ENCODE measurements at regions of chr20 and their contacts with region 1.

Region 1: GRCh38 chr20:47973519-47974233 is 188.4 kb upstream of the SULF2 start:
- DNase-seq: peak; percentile 95
- H3K4me3 Mint-ChIP-seq: peak overlapping the region; percentile 65
- H3K27ac Mint-ChIP-seq: peak overlapping the region; percentile 99
- H3K4me1 Mint-ChIP-seq: peaks cover 63% of the 10 kb centered on the region
- H3K27me3 Mint-ChIP-seq: no peaks in the 10 kb centered on the region
- CTCF ChIP-seq: no peak

Region 2: GRCh38 chr20:47857566-47858471 is 115.9 kb before region 1 on chr20:
- CTCF ChIA-PET with region 1: interaction called, 3 read pairs
- intact Hi-C with region 1: loop called (anchors 2 kb)
- DNase-seq: no peak
- H3K4me3 Mint-ChIP-seq: no peak overlapping the region
- H3K27ac Mint-ChIP-seq: peak overlapping the region; percentile 40
- H3K4me1 Mint-ChIP-seq: peaks cover 30% of the 10 kb centered on the region
- H3K27me3 Mint-ChIP-seq: peaks cover 2% of the 10 kb centered on the region
- CTCF ChIP-seq: no peak

Region 3: DNA sequence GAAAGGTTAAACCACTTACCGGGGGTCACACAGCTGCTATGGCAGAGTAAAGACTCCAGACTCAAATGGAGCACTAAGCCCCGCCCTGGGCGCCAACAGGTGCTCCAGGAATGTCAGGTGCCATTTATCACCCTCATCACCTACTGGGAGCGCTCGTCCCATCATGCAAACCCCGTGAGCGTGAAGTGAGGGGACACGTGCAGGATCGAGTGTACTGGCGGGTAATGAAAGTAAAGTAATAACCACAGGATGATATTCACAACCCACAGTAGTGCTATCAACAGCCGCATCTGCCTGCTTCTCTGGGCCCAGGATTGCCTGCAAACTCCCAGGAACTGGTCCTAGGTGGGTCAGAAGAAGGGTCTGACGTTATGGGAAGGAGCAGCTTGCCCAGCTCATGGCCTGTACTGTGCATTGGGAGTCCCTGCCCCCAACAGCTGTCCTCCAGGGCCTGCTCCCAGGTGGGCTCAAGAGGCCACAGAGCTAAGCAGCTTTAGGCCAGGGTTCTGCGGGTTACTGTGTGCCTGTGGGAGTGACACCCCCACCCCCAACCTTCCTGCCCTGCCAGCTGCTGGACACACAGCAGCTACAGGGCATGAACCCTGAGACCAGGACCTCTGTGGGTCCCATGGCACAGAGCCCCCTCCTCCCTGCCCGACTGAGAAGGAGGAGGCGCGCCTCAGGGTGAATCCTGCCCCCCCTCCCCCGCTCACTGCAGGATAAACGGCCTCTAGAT is 67.9 kb before region 1 on chr20:
- CTCF ChIA-PET with region 1: no interaction called
- intact Hi-C with region 1: no loop called
- DNase-seq: no peak
- H3K4me3 Mint-ChIP-seq: no peak overlapping the region
- H3K27ac Mint-ChIP-seq: no peak overlapping the region
- H3K4me1 Mint-ChIP-seq: peaks cover 13% of the 10 kb centered on the region
- H3K27me3 Mint-ChIP-seq: peaks cover 33% of the 10 kb centered on the region
- CTCF ChIP-seq: no peak

Region 4: GRCh38 chr20:48025031-48025515 is 51.4 kb after region 1 on chr20:
- CTCF ChIA-PET with region 1: no interaction called
- intact Hi-C with region 1: no loop called
- DNase-seq: no peak
- H3K4me3 Mint-ChIP-seq: no peak overlapping the region
- H3K27ac Mint-ChIP-seq: no peak overlapping the region
- H3K4me1 Mint-ChIP-seq: no peaks in the 10 kb centered on the region
- H3K27me3 Mint-ChIP-seq: peaks cover 6% of the 10 kb centered on the region
- CTCF ChIP-seq: no peak

Region 5: GRCh38 chr20:48064899-48065298 is 91.2 kb after region 1 on chr20:
- CTCF ChIA-PET with region 1: no interaction called
- intact Hi-C with region 1: loop called (anchors 5 kb)
- DNase-seq: no peak
- H3K4me3 Mint-ChIP-seq: no peak overlapping the region
- H3K27ac Mint-ChIP-seq: no peak overlapping the region
- H3K4me1 Mint-ChIP-seq: peaks cover 34% of the 10 kb centered on the region
- H3K27me3 Mint-ChIP-seq: no peaks in the 10 kb centered on the region
- CTCF ChIP-seq: no peak

Region 6: GRCh38 chr20:48283305-48284080 is 309.8 kb after region 1 on chr20:
- CTCF ChIA-PET with region 1: no interaction called
- intact Hi-C with region 1: loop called (anchors 5 kb)
- DNase-seq: peak; percentile 91
- H3K4me3 Mint-ChIP-seq: peak overlapping the region; percentile 2
- H3K27ac Mint-ChIP-seq: peak overlapping the region; percentile 51
- H3K4me1 Mint-ChIP-seq: peaks cover 55% of the 10 kb centered on the region
- H3K27me3 Mint-ChIP-seq: no peaks in the 10 kb centered on the region
- CTCF ChIP-seq: no peak

Region 7: DNA sequence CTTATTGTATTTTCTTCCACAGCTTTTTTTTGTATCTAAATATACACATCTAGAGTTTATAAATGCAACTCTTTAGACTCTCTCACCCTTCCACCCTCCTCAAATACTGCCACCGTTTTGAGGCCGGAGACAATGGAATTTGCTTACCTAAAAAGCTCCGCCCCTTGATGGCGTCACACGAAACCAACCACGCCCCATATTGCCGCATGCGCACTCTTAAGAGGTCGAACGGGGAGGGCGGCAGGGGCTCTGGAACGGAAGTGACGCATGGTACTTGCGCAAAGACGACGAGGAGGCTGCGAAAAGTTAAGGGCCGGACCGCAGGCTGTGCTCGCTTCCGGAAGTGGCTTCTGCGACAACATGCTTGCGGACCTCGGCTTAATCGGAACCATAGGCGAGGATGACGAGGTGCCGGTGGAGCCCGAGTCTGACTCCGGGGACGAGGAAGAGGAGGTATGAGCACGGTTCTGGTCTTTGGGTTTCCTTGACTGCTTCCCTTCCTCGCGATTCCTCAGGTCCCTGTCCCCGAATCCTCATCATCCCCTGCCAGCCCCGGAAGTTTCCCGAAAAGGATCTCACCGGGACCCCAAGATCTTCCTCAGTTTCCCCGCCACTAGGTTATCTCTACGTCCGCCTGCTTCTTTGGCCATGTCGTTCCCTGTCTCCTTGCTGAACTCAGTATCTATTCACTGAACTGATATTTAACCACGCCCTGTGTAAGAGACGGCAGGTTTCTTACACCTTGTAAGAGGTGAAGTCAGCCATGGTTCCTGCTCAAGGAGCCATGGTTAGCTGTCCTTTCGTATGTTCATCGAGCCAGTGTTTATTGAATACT is 1245.6 kb after region 1 on chr20 and contains the start of gene DDX27:
- CTCF ChIA-PET with region 1: no interaction called
- intact Hi-C with region 1: no loop called
- DNase-seq: peak; percentile 99
- H3K4me3 Mint-ChIP-seq: peak within 1 kb of the TSS; percentile 95
- H3K27ac Mint-ChIP-seq: peak within 1 kb of the TSS; percentile 96
- H3K4me1 Mint-ChIP-seq: peaks cover 14% of the 10 kb centered on the region
- H3K27me3 Mint-ChIP-seq: no peaks in the 10 kb centered on the region
- CTCF ChIP-seq: no peak
- total RNA-seq, gene DDX27: 87.3 and 96.0 TPM in 2 replicates